CD4-positive, alpha-beta T cell (primary cell): ENCODE measurements at regions of chr1 and their contacts with region 1.

Region 1: DNA sequence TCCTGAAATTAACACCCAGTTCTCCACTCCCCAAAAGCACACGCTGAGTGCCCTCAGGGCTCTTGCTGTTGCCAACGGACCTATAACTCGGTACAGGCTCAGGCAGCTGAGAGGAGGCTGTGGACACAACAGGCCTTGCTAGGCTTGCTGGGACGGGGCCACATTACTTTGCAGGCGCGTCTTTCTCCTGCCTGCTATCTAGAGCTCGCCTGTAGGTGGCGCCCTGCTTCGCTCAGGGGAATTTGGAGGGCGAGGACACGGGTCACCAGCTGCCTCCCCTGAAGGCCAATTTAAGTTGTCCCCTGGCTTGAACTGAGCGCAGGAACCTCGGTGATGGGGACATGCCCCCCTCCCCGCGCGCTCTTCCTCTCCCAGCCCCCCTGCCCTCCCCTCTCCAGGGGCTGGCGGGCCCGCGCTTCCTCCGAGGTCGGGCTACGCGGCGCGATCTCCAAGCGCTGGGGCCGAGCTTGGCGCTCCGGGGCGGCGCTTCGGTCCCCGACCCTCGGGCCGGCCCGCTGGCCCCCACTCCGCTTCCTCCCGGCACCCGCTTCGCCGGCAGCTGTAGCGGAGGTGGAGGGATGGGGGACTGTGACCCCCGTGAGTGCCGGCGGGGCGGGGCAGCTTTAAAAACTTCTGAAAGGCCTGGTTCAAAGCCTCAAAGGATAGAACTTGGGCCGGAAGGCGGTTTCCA is 32.4 kb upstream of the NFIA start:
- DNase-seq: peak; percentile 75 to 93 (median 88)
- ATAC-seq: peak; percentile 84
- H3K4me3 ChIP-seq: peak overlapping the region; percentile 61
- H3K4me3 Mint-ChIP-seq: peak overlapping the region; percentile 86
- H3K27ac ChIP-seq: no peak overlapping the region
- H3K27ac Mint-ChIP-seq: no peak overlapping the region
- H3K4me1 ChIP-seq: peaks cover 36% of the 10 kb centered on the region
- H3K4me1 Mint-ChIP-seq: peaks cover 42% of the 10 kb centered on the region
- H3K27me3 ChIP-seq: peaks cover 34 to 41% of the 10 kb centered on the region in 2 experiments
- H3K27me3 Mint-ChIP-seq: peaks cover 62% of the 10 kb centered on the region
- CTCF ChIP-seq: peak; percentile 93

Region 2: GRCh38 chr1:59971464-59971911 is 1078.5 kb before region 1 on chr1:
- CTCF ChIA-PET with region 1: no interaction called
- POLR2A ChIA-PET with region 1: no interaction called
- intact Hi-C with region 1: loop called in 1 of 2 experiments (anchors 10 kb)
- DNase-seq: peak in 13 of 14 experiments; percentile 4 to 61 (median 30)
- ATAC-seq: no peak
- H3K4me3 ChIP-seq: no peak overlapping the region
- H3K4me3 Mint-ChIP-seq: no peak overlapping the region
- H3K27ac ChIP-seq: no peak overlapping the region
- H3K27ac Mint-ChIP-seq: no peak overlapping the region
- H3K4me1 ChIP-seq: peaks cover 5% of the 10 kb centered on the region
- H3K4me1 Mint-ChIP-seq: peaks cover 7% of the 10 kb centered on the region
- H3K27me3 ChIP-seq: peaks cover 7 to 14% of the 10 kb centered on the region in 2 experiments
- H3K27me3 Mint-ChIP-seq: peaks cover 30% of the 10 kb centered on the region
- CTCF ChIP-seq: peak; percentile 81

Region 3: DNA sequence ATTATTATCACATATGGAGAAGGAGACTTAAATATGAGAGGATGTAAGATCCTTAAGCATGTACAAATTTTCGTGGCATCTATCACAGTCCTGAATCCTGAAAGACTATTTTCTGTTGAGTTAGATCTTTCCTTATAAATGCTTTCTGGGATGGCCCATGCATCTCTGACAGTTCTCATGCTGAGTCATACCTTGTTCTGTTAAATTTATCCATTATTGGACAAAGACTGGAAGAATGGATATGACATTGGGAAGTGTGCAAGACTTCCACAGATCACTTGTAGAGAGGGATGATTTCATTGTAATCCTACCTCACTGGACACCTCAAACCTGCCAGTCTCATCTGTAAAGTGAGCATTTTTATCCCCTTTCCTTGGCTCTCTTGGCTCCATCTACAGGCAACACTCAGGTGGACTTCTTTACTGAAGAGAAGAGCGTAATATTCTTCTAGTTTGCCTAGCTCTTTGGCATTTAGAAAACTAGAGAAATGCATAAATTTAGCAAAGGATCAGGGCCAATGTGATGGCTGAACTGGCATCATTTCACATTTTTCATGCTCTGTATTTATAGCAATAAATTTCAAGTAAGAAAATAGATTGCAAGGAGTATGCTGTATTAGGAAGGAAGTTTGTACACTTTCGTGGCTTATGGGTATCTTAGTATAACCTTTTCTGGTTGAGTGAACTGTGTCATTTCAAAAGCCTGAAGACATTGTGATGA is 160.6 kb after region 1 on chr1:
- CTCF ChIA-PET with region 1: interaction called, 6 read pairs
- POLR2A ChIA-PET with region 1: no interaction called
- intact Hi-C with region 1: loop called (anchors 2 to 5 kb)
- DNase-seq: peak in 3 of 14 experiments; percentile 19 to 26 (median 22)
- ATAC-seq: no peak
- H3K4me3 ChIP-seq: no peak overlapping the region
- H3K4me3 Mint-ChIP-seq: no peak overlapping the region
- H3K27ac ChIP-seq: no peak overlapping the region
- H3K27ac Mint-ChIP-seq: no peak overlapping the region
- H3K4me1 ChIP-seq: no peaks in the 10 kb centered on the region
- H3K4me1 Mint-ChIP-seq: no peaks in the 10 kb centered on the region
- H3K27me3 ChIP-seq: no peaks in the 10 kb centered on the region
- H3K27me3 Mint-ChIP-seq: no peaks in the 10 kb centered on the region
- CTCF ChIP-seq: peak; percentile 20

Region 4: GRCh38 chr1:61453111-61453961 is 403.3 kb after region 1 on chr1:
- CTCF ChIA-PET with region 1: interaction called, 14 read pairs
- POLR2A ChIA-PET with region 1: interaction called, 10 read pairs
- intact Hi-C with region 1: loop called (anchors 1 to 5 kb)
- DNase-seq: peak; percentile 43 to 83 (median 59)
- ATAC-seq: peak; percentile 81
- H3K4me3 ChIP-seq: no peak overlapping the region
- H3K4me3 Mint-ChIP-seq: no peak overlapping the region
- H3K27ac ChIP-seq: no peak overlapping the region
- H3K27ac Mint-ChIP-seq: peak overlapping the region; percentile 3
- H3K4me1 ChIP-seq: no peaks in the 10 kb centered on the region
- H3K4me1 Mint-ChIP-seq: peaks cover 12% of the 10 kb centered on the region
- H3K27me3 ChIP-seq: no peaks in the 10 kb centered on the region
- H3K27me3 Mint-ChIP-seq: no peaks in the 10 kb centered on the region
- CTCF ChIP-seq: peak; percentile 69

Region 5: DNA sequence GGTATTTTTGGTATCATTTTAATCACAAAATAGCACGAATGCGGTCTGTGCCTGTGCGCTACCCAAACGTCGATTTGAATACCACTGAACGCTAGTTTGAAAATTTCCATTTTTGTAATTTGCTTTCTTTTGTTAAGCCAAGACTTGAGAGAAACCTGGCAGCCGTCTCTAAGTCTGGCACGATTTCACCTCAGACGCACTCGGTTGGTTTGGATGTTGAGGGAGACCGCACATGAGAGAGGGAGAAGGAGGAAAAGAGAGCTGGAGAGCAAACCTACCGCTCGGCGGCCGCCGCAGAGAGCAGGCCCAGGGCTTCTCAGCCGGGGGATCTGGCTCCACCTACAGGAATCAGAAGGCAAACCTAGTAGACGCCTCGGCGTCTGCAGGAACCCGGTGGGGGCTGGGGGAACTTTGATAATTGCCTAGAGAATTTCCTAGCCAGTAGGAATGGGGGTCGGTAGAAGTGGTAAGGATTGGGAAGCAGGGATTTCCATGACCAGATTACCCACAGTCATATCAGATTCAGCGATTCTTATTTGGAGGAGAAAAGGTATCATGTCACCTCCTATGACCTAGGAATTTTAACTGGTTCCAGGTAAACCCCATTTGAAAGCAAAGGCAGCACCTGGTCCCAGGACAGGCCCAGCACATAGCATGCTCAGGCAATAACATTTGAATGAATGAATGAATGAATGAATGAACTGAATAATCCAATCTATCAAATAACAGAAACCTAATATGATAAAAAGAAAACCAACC is 591.8 kb after region 1 on chr1:
- CTCF ChIA-PET with region 1: no interaction called
- POLR2A ChIA-PET with region 1: no interaction called
- intact Hi-C with region 1: loop called (anchors 5 to 10 kb)
- DNase-seq: peak; percentile 23 to 75 (median 46)
- ATAC-seq: peak; percentile 91
- H3K4me3 ChIP-seq: no peak overlapping the region
- H3K4me3 Mint-ChIP-seq: peak overlapping the region; percentile 81
- H3K27ac ChIP-seq: no peak overlapping the region
- H3K27ac Mint-ChIP-seq: peak overlapping the region; percentile 62
- H3K4me1 ChIP-seq: peaks cover 13% of the 10 kb centered on the region
- H3K4me1 Mint-ChIP-seq: peaks cover 13% of the 10 kb centered on the region
- H3K27me3 ChIP-seq: no peaks in the 10 kb centered on the region
- H3K27me3 Mint-ChIP-seq: no peaks in the 10 kb centered on the region
- CTCF ChIP-seq: peak; percentile 76

Region 6: DNA sequence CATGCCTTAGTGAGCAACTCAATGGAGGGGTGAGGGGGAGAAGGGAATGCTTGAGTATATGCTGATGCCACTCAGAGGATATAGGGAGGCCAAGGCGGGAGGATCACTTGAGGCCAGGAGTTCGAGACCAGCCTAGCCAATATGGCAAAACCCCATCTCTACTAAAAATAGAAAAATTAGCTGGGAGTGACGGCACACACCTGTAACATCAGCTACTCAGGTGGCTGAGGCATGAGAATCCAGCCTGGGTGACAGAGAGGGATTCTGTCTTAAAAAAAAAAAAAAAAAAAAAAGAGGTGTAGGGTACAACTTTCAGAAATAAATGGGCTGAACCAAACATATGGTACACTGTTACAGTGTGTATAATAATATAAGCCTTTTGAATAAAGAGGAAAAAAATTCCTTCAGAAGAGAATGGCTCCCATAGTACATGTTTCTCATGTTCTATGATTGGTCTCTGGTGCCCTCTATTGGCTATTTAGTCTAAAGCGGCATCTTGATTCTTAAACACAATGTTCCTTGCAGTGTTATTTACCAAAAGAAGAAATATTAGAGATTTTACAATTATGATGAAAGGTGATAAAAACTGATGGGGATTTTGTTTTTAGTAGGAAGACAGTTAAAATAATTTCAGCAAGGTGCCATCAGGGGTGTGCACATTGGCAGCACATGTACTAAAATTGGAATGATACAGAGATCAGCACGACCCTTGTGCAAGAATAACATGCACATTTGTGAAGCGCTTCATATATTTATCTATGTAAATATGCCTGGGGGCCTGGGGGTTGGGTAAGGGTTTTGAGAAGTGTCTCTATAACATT is 802.1 kb after region 1 on chr1:
- CTCF ChIA-PET with region 1: no interaction called
- POLR2A ChIA-PET with region 1: no interaction called
- intact Hi-C with region 1: loop called (anchors 5 kb)
- DNase-seq: peak in 3 of 14 experiments; percentile 69 to 75 (median 75)
- ATAC-seq: peak; percentile 54
- H3K4me3 ChIP-seq: no peak overlapping the region
- H3K4me3 Mint-ChIP-seq: no peak overlapping the region
- H3K27ac ChIP-seq: no peak overlapping the region
- H3K27ac Mint-ChIP-seq: no peak overlapping the region
- H3K4me1 ChIP-seq: no peaks in the 10 kb centered on the region
- H3K4me1 Mint-ChIP-seq: no peaks in the 10 kb centered on the region
- H3K27me3 ChIP-seq: no peaks in the 10 kb centered on the region
- H3K27me3 Mint-ChIP-seq: no peaks in the 10 kb centered on the region
- CTCF ChIP-seq: peak; percentile 92